WTC11 (cell line): ENCODE measurements at regions of chr14 and their contacts with region 1.

Region 1: DNA sequence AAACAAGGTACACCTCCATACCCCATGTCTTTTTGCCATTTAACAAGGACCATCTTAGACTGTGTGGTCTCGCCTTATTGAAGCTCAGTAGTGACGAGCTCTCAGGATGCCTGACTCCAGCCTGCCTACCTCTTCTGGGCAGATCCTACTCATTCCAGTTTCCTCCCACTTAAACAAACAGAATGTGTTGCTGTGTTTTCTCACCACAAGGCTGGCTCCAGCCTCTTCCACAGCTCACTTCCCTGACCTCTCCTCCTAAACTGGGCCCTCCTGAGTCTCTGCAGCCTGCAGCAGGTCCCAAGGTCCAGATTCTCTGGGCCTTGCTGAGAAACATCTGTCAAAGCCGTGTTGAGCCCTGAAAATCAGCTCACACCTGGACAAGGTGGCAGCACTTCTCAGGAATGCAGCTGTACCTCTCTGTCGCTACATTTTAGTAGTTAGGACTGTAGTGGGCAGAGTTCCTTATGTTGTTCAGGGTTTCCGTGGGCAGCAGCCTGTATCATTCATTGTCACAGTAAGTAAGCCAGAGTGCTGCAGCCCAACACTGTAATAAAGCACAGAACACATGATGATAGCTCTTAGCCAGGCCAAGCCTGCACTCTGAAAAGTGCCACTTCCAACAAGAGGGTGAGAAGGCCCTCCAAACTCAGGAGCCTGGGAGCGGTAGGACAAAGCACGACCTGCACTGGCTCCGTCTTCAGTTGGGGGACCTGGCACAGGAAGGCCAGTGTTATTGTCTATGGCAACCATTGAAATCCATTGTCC is 68.5 kb downstream of the NKX2-1 start:
- DNase-seq: no peak
- ATAC-seq: no peak; the same call in 1 of the 2 replicates
- H3K4me3 Mint-ChIP-seq: no peak overlapping the region
- H3K27ac Mint-ChIP-seq: no peak overlapping the region
- H3K4me1 Mint-ChIP-seq: peaks cover 11% of the 10 kb centered on the region
- H3K27me3 Mint-ChIP-seq: peaks cover 63% of the 10 kb centered on the region
- CTCF ChIP-seq: no peak

Region 2: DNA sequence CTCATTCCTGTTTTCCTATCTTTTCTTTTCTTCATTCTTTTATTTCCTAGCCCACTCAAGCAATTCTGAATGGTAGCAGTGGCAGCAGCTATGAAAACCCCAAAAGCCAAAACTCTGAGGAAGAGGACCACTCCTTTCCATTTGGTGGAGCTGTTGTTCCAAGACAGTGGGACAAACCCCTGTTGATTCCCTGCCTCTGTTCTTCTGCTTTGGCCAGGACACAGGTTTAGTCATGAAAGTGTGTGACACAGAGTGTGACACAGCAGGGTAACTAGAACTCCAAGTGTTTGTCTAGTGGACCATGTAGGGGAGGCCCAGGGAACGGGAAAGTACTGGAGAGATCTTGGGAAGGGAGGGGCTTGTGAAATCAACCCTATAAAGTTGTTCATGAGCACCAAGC is 346.1 kb before region 1 on chr14:
- CTCF ChIA-PET with region 1: interaction called, 14 read pairs
- POLR2A ChIA-PET with region 1: no interaction called
- DNase-seq: peak; percentile 21
- ATAC-seq: peak; percentile 92
- H3K4me3 Mint-ChIP-seq: no peak overlapping the region
- H3K27ac Mint-ChIP-seq: no peak overlapping the region
- H3K4me1 Mint-ChIP-seq: no peaks in the 10 kb centered on the region
- H3K27me3 Mint-ChIP-seq: no peaks in the 10 kb centered on the region
- CTCF ChIP-seq: no peak

Region 3: GRCh38 chr14:36373982-36374673 is 77.4 kb before region 1 on chr14:
- CTCF ChIA-PET with region 1: interaction called, 13 read pairs
- POLR2A ChIA-PET with region 1: no interaction called
- DNase-seq: peak; percentile 90
- ATAC-seq: peak; percentile 98
- H3K4me3 Mint-ChIP-seq: no peak overlapping the region
- H3K27ac Mint-ChIP-seq: no peak overlapping the region
- H3K4me1 Mint-ChIP-seq: no peaks in the 10 kb centered on the region
- H3K27me3 Mint-ChIP-seq: peaks cover 19% of the 10 kb centered on the region
- CTCF ChIP-seq: peak; percentile 86

Region 4: DNA sequence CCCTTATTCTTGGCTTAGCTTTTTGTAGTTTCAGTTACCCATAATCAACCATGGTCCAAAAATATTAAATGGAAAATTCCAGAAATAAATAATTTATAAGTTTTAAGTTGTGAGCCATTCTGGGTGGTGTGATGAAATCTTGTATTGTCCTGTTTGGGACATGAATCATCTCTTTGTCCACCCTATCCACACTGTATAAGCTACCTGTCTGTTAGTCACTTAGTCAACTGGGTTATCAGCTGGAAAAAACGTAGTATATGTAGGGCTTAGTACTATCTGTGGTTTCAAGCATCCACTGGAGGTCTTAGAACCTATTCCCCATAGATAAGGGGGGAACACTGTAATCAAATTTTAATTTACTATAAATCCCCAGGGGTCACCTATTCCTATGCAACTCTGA is 15.8 kb after region 1 on chr14:
- CTCF ChIA-PET with region 1: interaction called, 10 read pairs
- POLR2A ChIA-PET with region 1: no interaction called
- DNase-seq: no peak
- ATAC-seq: no peak
- H3K4me3 Mint-ChIP-seq: no peak overlapping the region
- H3K27ac Mint-ChIP-seq: no peak overlapping the region
- H3K4me1 Mint-ChIP-seq: 0 out of 2 replicates have a peak, but pooled peaks cover 4% of the 10 kb centered on the region
- H3K27me3 Mint-ChIP-seq: peaks cover 21% of the 10 kb centered on the region
- CTCF ChIP-seq: no peak

Region 5: DNA sequence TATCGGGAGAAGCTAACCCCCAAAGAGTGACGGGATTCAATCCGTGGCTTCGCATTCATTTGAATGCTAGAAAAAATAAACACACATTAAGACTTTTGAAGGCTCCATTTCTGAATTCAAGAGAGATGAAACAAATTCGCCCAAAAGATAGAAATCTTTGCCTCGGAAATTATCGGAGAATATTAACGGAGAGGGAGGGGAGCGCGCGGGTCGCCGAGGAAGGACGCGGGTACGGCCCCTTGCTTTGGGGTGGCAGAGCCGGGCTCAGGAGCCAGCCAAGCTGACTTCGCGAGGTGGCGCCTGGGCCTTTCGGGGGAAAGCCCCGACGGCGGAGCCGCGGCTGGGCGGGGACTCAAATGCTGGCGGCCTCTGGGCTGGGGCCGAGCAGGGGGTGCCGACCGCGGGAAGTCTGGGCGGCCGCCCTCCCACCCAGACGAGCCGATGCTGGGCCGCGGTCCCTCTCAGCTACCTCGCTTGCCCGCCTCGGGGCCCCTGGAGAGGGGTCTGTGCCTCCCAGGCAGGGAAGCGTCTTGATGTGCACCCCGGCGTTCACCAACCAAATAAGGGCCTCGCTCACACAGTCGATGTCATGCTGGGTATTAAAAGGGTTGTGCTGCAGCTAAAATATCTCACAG is 53.8 kb after region 1 on chr14:
- CTCF ChIA-PET with region 1: interaction called, 12 read pairs
- POLR2A ChIA-PET with region 1: no interaction called
- DNase-seq: peak; percentile 60
- ATAC-seq: peak; percentile 30
- H3K4me3 Mint-ChIP-seq: peak overlapping the region; percentile 65
- H3K27ac Mint-ChIP-seq: no peak overlapping the region
- H3K4me1 Mint-ChIP-seq: peaks cover 56% of the 10 kb centered on the region
- H3K27me3 Mint-ChIP-seq: peaks cover 100% of the 10 kb centered on the region
- CTCF ChIP-seq: no peak